Activated CD4-positive, alpha-beta memory T cell treated with anti-CD3 and anti-CD28 coated beads for 36 hours (primary cell): ENCODE measurements at regions of chr2 and their contacts with region 1.

Region 1: DNA sequence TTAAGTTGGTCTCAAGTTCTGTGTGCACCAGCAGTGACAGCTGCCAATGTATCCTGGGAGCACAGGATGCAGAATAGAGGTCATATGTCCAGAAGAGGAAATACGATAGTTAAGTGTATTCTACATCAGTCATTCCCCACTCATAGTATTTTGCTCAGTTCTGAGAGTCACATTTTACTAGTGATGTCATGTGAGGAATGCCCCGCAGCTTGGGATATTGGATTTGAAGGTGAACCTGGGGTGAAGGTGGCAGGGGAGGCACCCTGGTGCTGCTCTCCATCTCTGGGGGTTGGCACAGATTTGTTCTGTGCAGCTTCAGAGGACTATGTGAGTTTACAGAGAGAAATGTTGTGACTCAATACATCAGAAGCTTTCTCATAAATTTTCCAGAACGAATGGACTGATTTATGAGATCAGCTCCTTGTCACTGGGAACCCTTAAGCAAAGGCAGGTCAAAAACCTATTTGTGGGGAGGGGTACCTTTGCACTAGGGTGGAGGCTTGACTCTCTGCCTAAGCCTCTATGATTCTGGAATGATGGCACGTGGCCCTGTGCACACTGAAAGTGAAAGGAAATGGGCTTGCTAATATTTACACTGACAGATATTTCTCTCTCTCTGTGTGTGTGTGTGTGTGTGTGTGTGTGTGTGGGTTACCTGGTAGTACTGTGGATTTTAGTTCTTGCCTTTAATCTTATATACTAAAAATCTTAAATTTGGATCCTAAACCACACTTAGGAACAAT is 95.9 kb downstream of the NEB start:
- DNase-seq: peak; percentile 41
- H3K4me3 Mint-ChIP-seq: peak overlapping the region; percentile 13
- H3K27ac Mint-ChIP-seq: peak overlapping the region; percentile 79
- H3K4me1 Mint-ChIP-seq: peaks cover 32% of the 10 kb centered on the region
- H3K27me3 Mint-ChIP-seq: no peaks in the 10 kb centered on the region

Region 2: GRCh38 chr2:151481744-151482143 is 156.6 kb before region 1 on chr2:
- CTCF ChIA-PET with region 1: no interaction called
- POLR2A ChIA-PET with region 1: no interaction called
- intact Hi-C with region 1: loop called (anchors 10 kb)
- DNase-seq: peak; percentile 54
- H3K4me3 Mint-ChIP-seq: no peak overlapping the region
- H3K27ac Mint-ChIP-seq: peak overlapping the region; percentile 61
- H3K4me1 Mint-ChIP-seq: peaks cover 32% of the 10 kb centered on the region
- H3K27me3 Mint-ChIP-seq: no peaks in the 10 kb centered on the region

Region 3: GRCh38 chr2:151614606-151615306 is 23.6 kb before region 1 on chr2:
- CTCF ChIA-PET with region 1: no interaction called
- POLR2A ChIA-PET with region 1: interaction called, 5 read pairs
- intact Hi-C with region 1: loop called (anchors 2 kb)
- DNase-seq: no peak
- H3K4me3 Mint-ChIP-seq: no peak overlapping the region
- H3K27ac Mint-ChIP-seq: peak overlapping the region; percentile 10
- H3K4me1 Mint-ChIP-seq: peaks cover 12% of the 10 kb centered on the region
- H3K27me3 Mint-ChIP-seq: no peaks in the 10 kb centered on the region

Region 4: DNA sequence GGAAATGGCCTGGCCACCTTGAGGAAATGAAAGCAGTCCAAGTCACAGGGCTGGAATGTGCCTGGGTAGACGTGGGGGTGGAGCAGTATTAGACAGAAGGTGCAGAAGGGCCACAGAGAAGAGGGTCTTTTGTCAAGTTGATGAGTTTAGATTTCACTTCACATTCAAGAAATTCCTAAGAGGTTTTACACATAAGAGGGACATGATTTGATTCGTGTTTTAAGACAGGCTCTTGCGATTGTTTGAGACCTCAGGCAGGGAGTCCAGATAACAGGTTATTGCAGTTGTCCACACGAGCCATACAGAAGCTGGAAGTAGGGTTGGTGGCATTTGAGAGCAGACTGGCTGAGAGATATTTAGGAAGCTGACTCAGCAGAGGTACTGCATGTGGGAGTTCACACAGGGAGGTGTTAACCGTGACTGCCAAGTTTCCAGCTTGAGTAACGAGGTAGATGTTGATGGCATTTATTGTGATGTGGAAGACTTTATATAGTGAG is 31.3 kb after region 1 on chr2:
- CTCF ChIA-PET with region 1: no interaction called
- POLR2A ChIA-PET with region 1: no interaction called
- intact Hi-C with region 1: loop called (anchors 2 kb)
- DNase-seq: peak; percentile 31
- H3K4me3 Mint-ChIP-seq: no peak overlapping the region
- H3K27ac Mint-ChIP-seq: no peak overlapping the region
- H3K4me1 Mint-ChIP-seq: peaks cover 12% of the 10 kb centered on the region
- H3K27me3 Mint-ChIP-seq: no peaks in the 10 kb centered on the region

Region 5: GRCh38 chr2:151766437-151767153 is 128.2 kb after region 1 on chr2:
- CTCF ChIA-PET with region 1: no interaction called
- POLR2A ChIA-PET with region 1: no interaction called
- intact Hi-C with region 1: loop called (anchors 10 kb)
- DNase-seq: peak; percentile 56
- H3K4me3 Mint-ChIP-seq: no peak overlapping the region
- H3K27ac Mint-ChIP-seq: no peak overlapping the region
- H3K4me1 Mint-ChIP-seq: peaks cover 8% of the 10 kb centered on the region
- H3K27me3 Mint-ChIP-seq: no peaks in the 10 kb centered on the region

Region 6: DNA sequence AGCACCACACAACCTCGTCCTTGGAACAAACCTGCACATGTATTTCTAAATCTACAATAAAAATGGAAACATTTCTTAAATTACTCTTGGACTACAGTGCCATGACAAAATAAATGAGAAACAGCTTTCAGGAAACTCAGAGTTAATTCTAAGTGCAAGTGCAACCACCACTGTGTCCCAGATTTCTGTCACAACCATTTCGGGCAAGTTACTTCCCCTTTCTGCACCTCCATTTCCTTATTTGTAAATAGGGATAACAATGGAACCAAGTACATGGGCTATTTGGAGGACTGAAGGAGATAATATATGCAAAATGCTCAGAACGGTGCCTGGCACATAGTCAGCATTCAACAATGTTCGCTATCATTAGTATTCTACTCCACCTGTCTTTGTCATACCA is 367.2 kb after region 1 on chr2:
- CTCF ChIA-PET with region 1: no interaction called
- POLR2A ChIA-PET with region 1: no interaction called
- intact Hi-C with region 1: loop called (anchors 10 kb)
- DNase-seq: no peak
- H3K4me3 Mint-ChIP-seq: no peak overlapping the region
- H3K27ac Mint-ChIP-seq: no peak overlapping the region
- H3K4me1 Mint-ChIP-seq: peaks cover 12% of the 10 kb centered on the region
- H3K27me3 Mint-ChIP-seq: peaks cover 8% of the 10 kb centered on the region

Region 7: GRCh38 chr2:152376385-152376784 is 738.0 kb after region 1 on chr2:
- CTCF ChIA-PET with region 1: no interaction called
- POLR2A ChIA-PET with region 1: no interaction called
- intact Hi-C with region 1: no loop called
- DNase-seq: no peak
- H3K4me3 Mint-ChIP-seq: no peak overlapping the region
- H3K27ac Mint-ChIP-seq: no peak overlapping the region
- H3K4me1 Mint-ChIP-seq: no peaks in the 10 kb centered on the region
- H3K27me3 Mint-ChIP-seq: peaks cover 12% of the 10 kb centered on the region